ENCODE measurements at regions of chr3 and their contacts with region 1.

Region 1: DNA sequence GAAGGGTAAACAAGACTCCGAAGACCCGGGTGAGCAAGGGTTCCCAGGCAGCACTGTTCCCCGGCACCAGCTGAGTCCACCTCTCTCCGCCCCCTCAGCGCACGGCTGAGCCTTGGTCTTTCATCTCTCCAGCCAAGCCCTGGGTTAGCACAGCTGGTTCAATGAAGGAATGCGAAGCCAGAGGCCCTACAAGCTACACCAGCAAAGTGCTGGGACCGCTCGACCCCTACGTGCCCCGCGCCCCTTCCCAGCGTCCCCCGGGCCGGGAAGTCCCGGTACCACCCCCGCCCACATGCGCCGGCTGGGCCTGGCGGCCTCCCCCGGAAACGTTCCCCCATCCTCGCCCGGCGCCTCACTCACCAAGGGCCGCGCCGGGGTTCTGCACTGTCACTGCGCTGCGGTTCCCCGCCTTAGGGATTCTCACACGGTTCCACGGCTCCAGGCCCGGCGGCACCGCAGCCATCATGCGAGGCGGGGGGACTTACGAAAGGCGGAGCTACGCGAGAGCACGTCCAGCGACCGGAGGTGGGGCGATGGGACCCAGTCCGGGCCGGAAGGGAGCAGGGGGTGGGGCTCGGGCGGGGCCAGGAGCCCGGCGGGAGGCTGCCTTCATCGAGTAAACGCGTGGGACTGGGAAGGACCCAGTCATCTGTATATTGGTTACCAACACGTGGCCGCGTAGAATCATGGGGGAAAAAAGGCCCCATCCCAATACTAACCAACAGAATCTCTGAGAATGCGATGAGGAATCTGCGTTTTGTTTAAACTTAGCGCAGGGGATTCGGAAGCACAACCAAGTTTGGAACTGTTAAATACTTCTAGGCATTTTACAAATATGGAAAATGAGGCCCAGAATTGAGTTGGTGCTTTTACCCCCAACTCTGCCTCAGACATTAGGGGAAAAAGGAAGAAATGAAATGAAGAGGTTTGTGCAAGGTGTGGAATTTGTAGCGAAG is 28.7 kb downstream of the GTPBP8 start:
- DNase-seq: peak; percentile 90
- H3K4me3 ChIP-seq: peak overlapping the region; percentile 79
- H3K27ac ChIP-seq: peak overlapping the region; percentile 76
- H3K4me1 ChIP-seq: peaks cover 26% of the 10 kb centered on the region
- CTCF ChIP-seq: no peak

Region 2: GRCh38 chr3:112561731-112562688 is 457.4 kb before region 1 on chr3 and contains the starts of genes ATG3 and SLC35A5:
- CTCF ChIA-PET with region 1: no interaction called
- POLR2A ChIA-PET with region 1: no interaction called
- intact Hi-C with region 1: loop called (anchors 5 kb)
- DNase-seq: peak; percentile 99
- H3K4me3 ChIP-seq: peak within 1 kb of the TSS; percentile 95
- H3K27ac ChIP-seq: peak within 1 kb of the TSS; percentile 80
- H3K4me1 ChIP-seq: peaks cover 28% of the 10 kb centered on the region
- CTCF ChIP-seq: 0 out of 2 replicates have a peak, but pooled peaks have one; percentile 5
- total RNA-seq, gene ATG3: 84.6 and 109 TPM in 2 replicates
- total RNA-seq, gene SLC35A5: 10.3 and 12.4 TPM in 2 replicates

Region 3: GRCh38 chr3:112990672-112991602 is 28.5 kb before region 1 on chr3 and contains the start of gene GTPBP8:
- CTCF ChIA-PET with region 1: no interaction called
- POLR2A ChIA-PET with region 1: interaction called, 33 read pairs
- intact Hi-C with region 1: loop called (anchors 1 kb)
- DNase-seq: peak; percentile 90
- H3K4me3 ChIP-seq: peak within 1 kb of the TSS; percentile 90
- H3K27ac ChIP-seq: peak within 1 kb of the TSS; percentile 86
- H3K4me1 ChIP-seq: peaks cover 33% of the 10 kb centered on the region
- CTCF ChIP-seq: no peak
- total RNA-seq, gene GTPBP8: 17.6 and 23.8 TPM in 2 replicates

Region 4: DNA sequence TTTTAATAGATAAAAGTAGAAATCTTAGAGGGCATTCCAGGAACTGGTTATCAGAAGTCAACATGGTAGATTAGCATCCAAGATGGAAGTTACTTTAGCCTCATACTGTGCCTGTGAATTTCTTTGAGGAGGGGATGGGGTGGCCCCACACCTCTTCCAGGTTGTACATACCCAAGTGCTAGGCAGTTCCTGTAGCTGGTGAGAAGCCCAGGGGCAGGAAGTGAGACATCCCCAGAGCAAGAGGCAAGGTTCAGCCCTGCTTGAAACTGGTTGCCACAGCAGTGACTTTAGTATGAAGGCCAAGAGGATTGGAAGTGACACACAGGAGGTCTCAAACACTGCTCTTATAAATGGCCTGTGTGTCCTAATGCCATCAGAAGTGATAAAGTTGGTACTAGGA is 16.8 kb before region 1 on chr3:
- CTCF ChIA-PET with region 1: no interaction called
- POLR2A ChIA-PET with region 1: interaction called, 45 read pairs
- intact Hi-C with region 1: no loop called
- DNase-seq: peak; percentile 8
- H3K4me3 ChIP-seq: no peak overlapping the region
- H3K27ac ChIP-seq: no peak overlapping the region
- H3K4me1 ChIP-seq: peaks cover 11% of the 10 kb centered on the region
- CTCF ChIP-seq: no peak

Region 5: DNA sequence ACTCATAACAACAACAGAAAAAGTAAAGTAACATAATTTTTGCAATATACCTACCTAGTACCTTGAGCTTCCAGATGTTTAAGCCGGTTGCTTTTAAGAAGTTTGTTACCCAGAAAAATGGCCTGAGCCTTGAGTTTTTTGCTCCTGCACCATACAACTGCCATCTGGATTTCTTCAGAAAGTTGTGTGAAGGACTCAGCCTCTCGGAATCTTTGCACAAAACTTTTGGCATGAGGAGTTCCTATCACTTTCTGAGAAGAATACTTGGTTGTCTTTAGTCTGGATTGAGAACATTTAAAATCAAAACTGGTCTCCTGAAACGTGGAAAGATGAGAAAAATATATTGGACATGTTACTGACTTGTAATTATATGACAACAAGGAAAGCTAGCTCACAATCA is 11.3 kb before region 1 on chr3:
- CTCF ChIA-PET with region 1: interaction called, 4 read pairs
- POLR2A ChIA-PET with region 1: interaction called, 45 read pairs
- intact Hi-C with region 1: no loop called
- DNase-seq: no peak
- H3K4me3 ChIP-seq: no peak overlapping the region
- H3K27ac ChIP-seq: no peak overlapping the region
- H3K4me1 ChIP-seq: no peaks in the 10 kb centered on the region
- CTCF ChIP-seq: no peak